ENCODE measurements at regions of chr16 and their contacts with region 1.

Region 1: GRCh38 chr16:49890876-49891275 is 35.0 kb upstream of the ZNF423 start:
- DNase-seq: peak; percentile 60
- H3K4me3 Mint-ChIP-seq: no peak overlapping the region
- H3K27ac Mint-ChIP-seq: no peak overlapping the region
- H3K4me1 Mint-ChIP-seq: peaks cover 4% of the 10 kb centered on the region
- H3K27me3 Mint-ChIP-seq: peaks cover 9% of the 10 kb centered on the region

Region 2: GRCh38 chr16:49876716-49877129 is 14.2 kb before region 1 on chr16:
- CTCF ChIA-PET with region 1: interaction called, 18 read pairs
- intact Hi-C with region 1: no loop called
- DNase-seq: peak; percentile 49
- H3K4me3 Mint-ChIP-seq: no peak overlapping the region
- H3K27ac Mint-ChIP-seq: no peak overlapping the region
- H3K4me1 Mint-ChIP-seq: no peaks in the 10 kb centered on the region
- H3K27me3 Mint-ChIP-seq: peaks cover 38% of the 10 kb centered on the region

Region 3: GRCh38 chr16:49993579-49993978 is 102.7 kb after region 1 on chr16:
- CTCF ChIA-PET with region 1: no interaction called
- intact Hi-C with region 1: no loop called
- DNase-seq: no peak
- H3K4me3 Mint-ChIP-seq: no peak overlapping the region
- H3K27ac Mint-ChIP-seq: no peak overlapping the region
- H3K4me1 Mint-ChIP-seq: no peaks in the 10 kb centered on the region
- H3K27me3 Mint-ChIP-seq: peaks cover 3% of the 10 kb centered on the region

Region 4: GRCh38 chr16:50093607-50094539 is 203.0 kb after region 1 on chr16:
- CTCF ChIA-PET with region 1: no interaction called
- intact Hi-C with region 1: no loop called
- DNase-seq: no peak
- H3K4me3 Mint-ChIP-seq: no peak overlapping the region
- H3K27ac Mint-ChIP-seq: no peak overlapping the region
- H3K4me1 Mint-ChIP-seq: no peaks in the 10 kb centered on the region
- H3K27me3 Mint-ChIP-seq: no peaks in the 10 kb centered on the region